Activated CD4-positive, alpha-beta T cell treated with anti-CD3 and anti-CD28 coated beads, Interleukin-2, amount 10 ng/mL, durations not matched to agents 24 days and 14 days (primary cell): ENCODE measurements at regions of chrX and their contacts with region 1.

Region 1: DNA sequence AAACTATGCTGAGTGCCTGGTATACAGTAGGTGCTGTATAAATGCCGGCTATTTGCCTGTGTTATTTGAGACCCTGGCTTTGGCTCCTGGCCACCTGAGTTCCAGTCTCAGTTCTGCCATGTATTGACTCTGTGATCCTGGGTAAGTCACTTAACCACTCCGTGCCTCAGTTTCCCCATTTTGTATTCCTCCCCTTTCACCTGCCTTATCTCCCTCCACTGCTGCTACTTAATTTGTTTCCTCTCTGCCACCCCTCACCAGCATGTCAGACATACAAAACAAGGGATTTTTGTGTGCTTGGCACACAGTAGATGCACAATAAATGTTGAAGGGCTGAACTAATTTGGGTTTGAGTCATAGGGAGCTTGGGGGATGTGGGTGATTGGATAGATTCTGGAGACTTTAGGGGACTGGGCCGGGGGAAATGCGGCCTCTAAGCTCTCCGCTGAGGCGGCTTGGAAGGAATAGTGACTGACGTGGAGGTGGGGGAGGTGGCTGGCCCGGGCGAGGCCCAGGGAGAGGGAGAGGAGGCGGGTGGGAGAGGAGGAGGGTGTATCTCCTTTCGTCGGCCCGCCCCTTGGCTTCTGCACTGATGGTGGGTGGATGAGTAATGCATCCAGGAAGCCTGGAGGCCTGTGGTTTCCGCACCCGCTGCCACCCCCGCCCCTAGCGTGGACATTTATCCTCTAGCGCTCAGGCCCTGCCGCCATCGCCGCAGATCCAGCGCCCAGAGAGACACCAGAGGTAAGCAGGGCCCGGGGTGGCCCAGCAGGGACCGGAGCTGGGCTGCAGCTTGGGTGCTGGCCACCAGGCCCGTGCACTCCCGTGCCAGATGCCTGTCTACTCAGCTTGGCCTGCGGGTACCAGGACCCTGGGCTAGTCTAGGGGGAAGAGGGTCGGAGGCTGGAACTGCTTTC is at the start of gene TIMP1:
- DNase-seq: peak; percentile 93
- H3K4me3 Mint-ChIP-seq: peak within 1 kb of the TSS; percentile 80
- H3K27ac Mint-ChIP-seq: peak within 1 kb of the TSS; percentile 81
- H3K4me1 Mint-ChIP-seq: peaks cover 40% of the 10 kb centered on the region
- H3K27me3 Mint-ChIP-seq: peaks cover under 1% of the 10 kb centered on the region
- total RNA-seq, gene TIMP1: 65.2 and 65.6 TPM in 2 replicates

Region 2: GRCh38 chrX:47327902-47328301 is 254.1 kb before region 1 on chrX:
- intact Hi-C with region 1: no loop called
- DNase-seq: no peak
- H3K4me3 Mint-ChIP-seq: no peak overlapping the region
- H3K27ac Mint-ChIP-seq: no peak overlapping the region
- H3K4me1 Mint-ChIP-seq: no peaks in the 10 kb centered on the region
- H3K27me3 Mint-ChIP-seq: no peaks in the 10 kb centered on the region

Region 3: GRCh38 chrX:47619486-47620302 is 37.7 kb after region 1 on chrX and contains the start of gene SYN1:
- intact Hi-C with region 1: loop called (anchors 5 kb)
- DNase-seq: peak; percentile 94
- H3K4me3 Mint-ChIP-seq: peak within 1 kb of the TSS; percentile 72
- H3K27ac Mint-ChIP-seq: no peak within 1 kb of the TSS
- H3K4me1 Mint-ChIP-seq: peaks cover 13% of the 10 kb centered on the region
- H3K27me3 Mint-ChIP-seq: peaks cover 31% of the 10 kb centered on the region
- total RNA-seq, gene SYN1: 0.49 and 0.54 TPM in 2 replicates

Region 4: DNA sequence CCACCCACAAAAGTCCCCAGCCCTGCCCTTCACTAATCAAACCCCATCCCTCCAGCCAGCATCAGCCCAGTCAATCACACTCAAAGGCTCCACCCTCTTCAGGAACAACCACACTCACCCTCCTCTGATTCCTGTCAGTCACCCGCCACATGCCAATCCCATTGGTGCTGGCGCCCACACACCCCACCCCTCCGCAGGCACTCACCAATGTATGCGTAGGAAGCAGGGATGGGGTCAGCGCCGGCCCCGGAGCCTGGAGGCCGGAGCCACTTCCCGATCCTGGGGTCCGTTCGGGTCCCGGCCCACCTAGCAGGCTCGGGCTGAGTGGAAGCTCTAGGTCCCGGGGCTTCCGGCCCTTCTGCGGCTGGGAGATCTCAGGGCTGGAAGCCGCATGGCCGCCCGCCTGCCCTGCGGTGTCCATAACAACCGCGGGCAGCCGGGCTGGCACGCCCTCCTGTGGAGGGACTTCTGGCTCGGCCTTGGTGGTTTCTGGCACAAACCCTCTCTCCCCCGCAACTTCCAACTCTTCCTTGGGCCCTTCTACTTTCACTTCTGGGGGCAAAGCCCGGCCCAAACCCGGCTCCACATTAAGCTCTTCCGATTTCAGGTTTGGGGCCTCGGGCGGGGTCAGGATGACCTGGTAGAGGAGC is 55.7 kb after region 1 on chrX:
- intact Hi-C with region 1: loop called (anchors 5 kb)
- DNase-seq: peak; percentile 76
- H3K4me3 Mint-ChIP-seq: peak overlapping the region; percentile 66
- H3K27ac Mint-ChIP-seq: peak overlapping the region; percentile 17
- H3K4me1 Mint-ChIP-seq: peaks cover 21% of the 10 kb centered on the region
- H3K27me3 Mint-ChIP-seq: no peaks in the 10 kb centered on the region